ENCODE measurements at regions of chr10 and their contacts with region 1.

Region 1: DNA sequence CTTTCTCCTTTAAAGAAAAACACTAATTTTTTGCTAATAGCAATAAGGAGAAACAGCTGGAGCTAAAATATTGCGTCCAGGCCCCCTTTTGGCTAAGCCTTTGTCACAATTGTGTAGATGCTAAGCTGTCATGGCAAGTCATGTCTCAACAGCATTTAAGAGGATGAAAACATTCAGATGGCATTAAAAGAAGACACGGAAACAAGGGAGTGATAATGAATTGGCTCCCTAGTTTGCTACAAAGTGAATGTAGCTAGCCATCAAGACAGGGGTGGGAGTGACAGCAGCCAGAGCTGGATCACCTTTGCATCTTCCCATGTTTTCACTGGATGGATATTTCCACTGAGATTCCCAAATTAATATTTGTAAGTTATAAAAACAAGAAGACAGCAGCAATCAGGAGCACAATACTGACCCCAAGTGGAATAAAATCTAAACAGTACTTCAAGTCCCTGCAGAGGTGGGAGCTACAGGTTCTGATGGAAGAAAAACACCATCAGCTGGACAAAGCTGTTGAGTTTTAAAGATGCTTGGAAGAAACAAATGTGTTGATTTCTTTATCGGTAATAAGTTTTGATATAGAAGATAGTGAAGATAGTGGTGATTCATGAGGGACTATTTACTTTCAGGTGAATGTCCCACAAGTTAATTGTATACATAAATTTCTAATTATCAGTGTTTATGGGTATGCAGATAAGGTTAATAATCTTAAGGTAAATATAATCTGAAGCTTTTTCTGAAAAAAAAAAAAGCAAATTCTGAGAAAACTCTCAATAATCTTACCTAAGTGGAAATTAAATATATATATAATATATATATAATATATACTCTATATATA is 129.4 kb downstream of the SLC16A9 start:
- DNase-seq: no peak
- ATAC-seq: no peak
- H3K4me3 Mint-ChIP-seq: no peak overlapping the region
- H3K27ac Mint-ChIP-seq: no peak overlapping the region
- H3K4me1 Mint-ChIP-seq: no peaks in the 10 kb centered on the region
- H3K27me3 Mint-ChIP-seq: peaks cover 2% of the 10 kb centered on the region
- CTCF ChIP-seq: no peak

Region 2: DNA sequence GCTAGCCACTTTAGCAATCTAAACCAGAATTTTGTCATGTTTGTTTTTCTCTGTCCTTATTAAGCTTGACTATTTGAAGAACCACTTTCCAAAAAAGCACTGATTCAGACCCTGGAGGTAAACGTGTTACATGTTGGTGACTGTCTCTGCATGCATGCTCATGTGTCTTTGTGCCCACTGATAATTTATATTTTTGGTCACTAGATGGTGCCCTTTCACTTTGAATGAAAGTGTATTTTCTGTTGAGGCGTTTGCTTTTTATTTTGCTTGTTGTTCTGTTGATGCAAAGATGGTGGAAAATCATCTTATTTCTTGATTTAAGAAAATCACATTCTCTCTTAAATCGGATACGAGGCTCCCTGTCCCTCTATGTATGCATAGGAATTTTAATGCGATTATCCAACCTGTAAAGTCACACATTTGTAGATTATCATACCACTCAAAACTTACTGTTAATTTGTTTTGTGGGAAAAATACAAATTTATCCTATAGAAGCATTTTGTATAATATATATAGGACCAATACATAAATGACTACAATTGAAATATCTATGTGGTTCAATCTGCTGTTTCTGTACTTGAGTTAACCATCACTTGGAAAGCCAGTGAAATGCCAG is 798.3 kb before region 1 on chr10:
- CTCF ChIA-PET with region 1: no interaction called
- POLR2A ChIA-PET with region 1: no interaction called
- intact Hi-C with region 1: loop called (anchors 10 kb)
- DNase-seq: no peak
- ATAC-seq: no peak
- H3K4me3 Mint-ChIP-seq: no peak overlapping the region
- H3K27ac Mint-ChIP-seq: no peak overlapping the region
- H3K4me1 Mint-ChIP-seq: no peaks in the 10 kb centered on the region
- H3K27me3 Mint-ChIP-seq: peaks cover 4% of the 10 kb centered on the region
- CTCF ChIP-seq: peak; percentile 74

Region 3: GRCh38 chr10:59240582-59241183 is 339.6 kb before region 1 on chr10:
- CTCF ChIA-PET with region 1: no interaction called
- POLR2A ChIA-PET with region 1: no interaction called
- intact Hi-C with region 1: loop called (anchors 10 kb)
- DNase-seq: no peak
- ATAC-seq: no peak
- H3K4me3 Mint-ChIP-seq: no peak overlapping the region
- H3K27ac Mint-ChIP-seq: no peak overlapping the region
- H3K4me1 Mint-ChIP-seq: no peaks in the 10 kb centered on the region
- H3K27me3 Mint-ChIP-seq: peaks cover 2% of the 10 kb centered on the region
- CTCF ChIP-seq: peak; percentile 67